Activated CD8-positive, alpha-beta T cell treated with anti-CD3 and anti-CD28 coated beads for 36 hours (primary cell): ENCODE measurements at regions of chr7 and their contacts with region 1.

Region 1: GRCh38 chr7:18345641-18346234 is 149.8 kb upstream of the HDAC9 start:
- DNase-seq: peak; percentile 46
- ATAC-seq: peak; percentile 61
- H3K4me3 Mint-ChIP-seq: no peak overlapping the region
- H3K27ac Mint-ChIP-seq: no peak overlapping the region
- H3K4me1 Mint-ChIP-seq: no peaks in the 10 kb centered on the region
- H3K27me3 Mint-ChIP-seq: peaks cover 1% of the 10 kb centered on the region
- CTCF ChIP-seq: peak; percentile 75

Region 2: GRCh38 chr7:17680943-17681351 is 664.8 kb before region 1 on chr7:
- CTCF ChIA-PET with region 1: interaction called, 23 read pairs
- POLR2A ChIA-PET with region 1: no interaction called
- intact Hi-C with region 1: no loop called
- DNase-seq: no peak
- ATAC-seq: no peak
- H3K4me3 Mint-ChIP-seq: no peak overlapping the region
- H3K27ac Mint-ChIP-seq: no peak overlapping the region
- H3K4me1 Mint-ChIP-seq: no peaks in the 10 kb centered on the region
- H3K27me3 Mint-ChIP-seq: no peaks in the 10 kb centered on the region
- CTCF ChIP-seq: peak; percentile 74